Prostate gland (tissue), 2 donors: ENCODE measurements at regions of chr9 and their contacts with region 1.

Region 1: GRCh38 chr9:6552033-6552432 is 93.5 kb downstream of the GLDC start:
- DNase-seq: no peak
- H3K4me3 ChIP-seq: no peak overlapping the region
- H3K27ac ChIP-seq: no peak overlapping the region
- H3K4me1 ChIP-seq: no peaks in the 10 kb centered on the region
- H3K27me3 ChIP-seq: no peaks in the 10 kb centered on the region
- CTCF ChIP-seq: no peak
- POLR2A ChIP-seq: no peak

Region 2: DNA sequence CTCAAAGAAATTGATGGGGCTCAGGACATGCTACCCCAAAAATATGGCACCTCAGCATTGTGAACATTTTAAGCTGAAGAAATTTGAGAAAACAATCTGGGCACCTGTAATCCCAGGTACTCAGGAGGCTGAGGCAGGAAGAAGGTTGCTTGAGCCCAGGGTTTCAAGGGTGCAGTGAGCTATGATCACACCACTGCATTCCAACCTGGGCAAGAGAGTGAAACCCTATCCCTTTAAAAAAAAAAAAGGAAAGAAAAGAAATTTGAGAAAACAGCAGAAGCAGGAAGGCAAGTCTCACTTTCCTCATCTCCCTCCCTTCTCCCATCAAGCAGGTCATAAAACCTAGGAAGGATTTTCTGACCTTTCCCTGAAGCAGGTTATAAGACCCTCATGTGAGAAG is 200.3 kb before region 1 on chr9:
- intact Hi-C with region 1: no loop called
- DNase-seq: no peak
- H3K4me3 ChIP-seq: no peak overlapping the region
- H3K27ac ChIP-seq: no peak overlapping the region
- H3K4me1 ChIP-seq: no peaks in the 10 kb centered on the region
- H3K27me3 ChIP-seq: no peaks in the 10 kb centered on the region
- CTCF ChIP-seq: no peak
- POLR2A ChIP-seq: no peak

Region 3: GRCh38 chr9:6616951-6617602 is 65.0 kb after region 1 on chr9:
- intact Hi-C with region 1: loop called (anchors 10 kb)
- DNase-seq: no peak
- H3K4me3 ChIP-seq: no peak overlapping the region
- H3K27ac ChIP-seq: no peak overlapping the region
- H3K4me1 ChIP-seq: no peaks in the 10 kb centered on the region
- H3K27me3 ChIP-seq: no peaks in the 10 kb centered on the region
- CTCF ChIP-seq: no peak
- POLR2A ChIP-seq: no peak